Posterior vena cava (tissue), 2 donors: ENCODE measurements at regions of chr22 and their contacts with region 1.

Region 1: DNA sequence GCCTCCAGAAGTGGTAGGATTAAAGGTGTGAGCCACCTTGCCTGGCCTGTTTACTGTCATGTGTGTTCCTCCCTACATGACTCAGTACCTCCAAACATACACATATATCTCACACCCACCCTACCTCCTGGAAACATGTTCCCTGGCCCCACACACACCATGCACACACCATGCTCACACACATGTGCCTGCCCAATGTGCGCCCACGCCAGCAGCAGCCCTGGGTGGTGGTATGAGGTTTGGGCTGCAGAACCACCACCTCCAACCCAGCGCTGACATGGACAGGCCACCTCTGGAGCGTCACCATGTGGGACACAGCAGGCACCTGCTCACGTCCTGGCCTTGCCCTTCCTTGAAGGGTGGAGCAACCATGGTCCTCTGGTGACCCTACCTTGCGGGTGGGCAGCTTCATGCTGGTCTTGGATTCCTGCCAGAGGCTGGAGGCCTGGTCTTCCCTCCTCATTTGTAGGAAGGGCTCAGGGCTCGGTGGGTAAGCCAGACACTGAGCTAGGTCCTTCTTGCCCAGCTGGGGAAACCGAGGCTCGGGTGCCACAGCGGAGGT is 37.9 kb downstream of the KIAA1671 start:
- DNase-seq: no peak

Region 2: DNA sequence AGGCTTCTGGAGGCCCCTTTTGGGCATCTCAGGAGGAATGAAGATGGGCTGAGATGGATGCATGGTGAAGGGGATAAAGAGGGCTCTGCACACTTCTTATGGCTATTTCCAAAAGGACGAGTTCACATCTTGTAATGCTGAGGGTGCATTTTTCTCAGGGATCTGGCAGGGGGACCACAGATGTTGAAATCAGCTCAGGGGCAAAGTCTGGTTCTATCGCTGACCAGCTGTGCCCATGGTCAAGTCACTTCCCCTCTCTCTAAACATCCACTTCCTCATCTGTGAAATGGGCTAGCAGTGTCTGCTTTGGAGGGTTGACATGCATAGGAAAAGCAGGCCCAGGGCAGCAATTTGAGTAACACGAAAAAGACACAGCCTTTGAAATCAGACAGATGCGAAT is 70.4 kb before region 1 on chr22:
- intact Hi-C with region 1: loop called in 1 of 2 experiments (anchors 2 kb)
- DNase-seq: no peak

Region 3: GRCh38 chr22:25125693-25126357 is 135.4 kb after region 1 on chr22:
- intact Hi-C with region 1: no loop called
- DNase-seq: no peak